ENCODE measurements at regions of chr16 and their contacts with region 1.

Region 1: DNA sequence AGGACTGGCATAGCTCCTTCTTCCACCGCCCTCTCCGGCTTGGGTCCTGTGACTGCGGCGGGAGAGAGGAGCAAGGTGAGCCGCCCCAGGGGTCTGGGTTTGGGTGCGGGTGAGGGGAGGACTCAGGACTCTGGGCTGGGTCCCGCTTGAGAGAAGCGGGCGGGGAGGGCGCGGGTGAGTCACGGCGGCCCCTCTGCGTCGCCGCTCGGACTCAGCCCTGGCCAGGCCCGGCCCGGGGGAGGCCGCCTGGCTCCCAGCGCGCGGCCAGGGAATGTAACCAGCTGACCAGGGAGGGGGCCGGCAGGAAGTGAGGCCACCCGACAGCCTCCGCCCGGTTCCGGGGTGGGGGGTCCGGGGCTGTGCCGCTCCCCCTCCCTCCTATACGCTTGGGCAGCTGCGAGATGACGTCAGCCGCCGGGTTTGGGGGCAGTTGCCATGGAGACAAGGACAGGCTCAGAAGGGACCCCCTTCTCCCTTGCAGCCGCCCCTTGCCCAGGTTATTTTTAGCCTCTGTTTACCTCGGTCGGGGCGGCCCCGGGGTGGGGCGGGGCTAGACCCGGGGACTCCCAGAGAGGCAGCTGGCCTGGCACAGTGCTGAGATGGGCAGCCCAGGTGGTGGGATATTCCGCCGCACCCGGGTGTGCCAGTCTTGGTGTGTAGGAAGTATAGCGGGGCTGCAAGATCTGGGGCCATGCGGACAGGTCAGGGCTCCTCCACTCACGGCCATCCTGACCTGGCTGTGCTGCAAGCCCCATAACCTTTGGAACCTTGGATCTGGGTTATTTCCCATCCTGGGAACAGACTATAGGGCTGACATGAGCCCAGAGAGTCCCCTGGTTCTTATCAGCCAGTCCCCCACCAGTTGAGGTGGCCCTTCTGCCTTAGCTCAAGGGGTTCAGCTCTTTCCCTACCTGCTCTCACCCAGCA is 1.6 kb downstream of the RIPOR1 start:
- DNase-seq: no peak
- H3K4me3 ChIP-seq: peak overlapping the region; percentile 73
- CTCF ChIP-seq: no peak

Region 2: DNA sequence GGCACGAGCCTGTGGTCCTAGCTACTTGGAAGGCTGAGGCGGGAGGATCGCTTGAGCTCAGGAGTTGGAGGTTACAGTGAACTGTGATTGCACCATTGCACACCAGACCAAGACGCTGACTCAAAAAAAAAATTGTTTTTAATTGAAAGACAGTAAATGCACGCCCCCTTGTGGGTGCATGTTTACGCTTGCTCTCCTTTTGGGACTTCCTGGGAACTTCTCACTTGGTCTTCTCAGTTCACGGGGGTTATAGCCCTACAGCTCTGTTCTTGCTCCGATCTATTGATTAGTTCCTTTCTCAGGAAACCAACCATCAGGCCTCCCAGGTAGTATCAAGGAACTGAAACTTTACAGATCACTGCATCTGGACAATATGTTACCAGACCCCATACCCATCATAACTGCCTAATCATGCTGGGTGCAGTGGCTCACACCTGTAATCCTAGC is 15.9 kb before region 1 on chr16:
- CTCF ChIA-PET with region 1: interaction called, 138 read pairs
- POLR2A ChIA-PET with region 1: no interaction called
- DNase-seq: peak; percentile 42
- H3K4me3 ChIP-seq: no peak overlapping the region
- CTCF ChIP-seq: peak; percentile 56

Region 3: GRCh38 chr16:67546761-67547422 is 16.6 kb after region 1 on chr16:
- CTCF ChIA-PET with region 1: interaction called, 115 read pairs
- POLR2A ChIA-PET with region 1: interaction called, 4 read pairs
- DNase-seq: no peak
- H3K4me3 ChIP-seq: no peak overlapping the region
- CTCF ChIP-seq: peak; percentile 93

Measured in AG04449 (cell line).